MCF 10A (cell line): ENCODE measurements at regions of chr11 and their contacts with region 1.

Region 1: GRCh38 chr11:8768625-8769333 is 86.2 kb downstream of the RPL27A start:
- DNase-seq: peak; percentile 80
- H3K4me3 Mint-ChIP-seq: no peak overlapping the region
- H3K27ac Mint-ChIP-seq: peak overlapping the region; percentile 81
- H3K4me1 Mint-ChIP-seq: peaks cover 59% of the 10 kb centered on the region
- H3K27me3 Mint-ChIP-seq: no peaks in the 10 kb centered on the region
- CTCF ChIP-seq: no peak

Region 2: GRCh38 chr11:8604078-8604723 is 164.6 kb before region 1 on chr11:
- CTCF ChIA-PET with region 1: no interaction called
- POLR2A ChIA-PET with region 1: no interaction called
- intact Hi-C with region 1: loop called (anchors 5 kb)
- DNase-seq: peak; percentile 100
- H3K4me3 Mint-ChIP-seq: peak overlapping the region; percentile 15
- H3K27ac Mint-ChIP-seq: peak overlapping the region; percentile 95
- H3K4me1 Mint-ChIP-seq: peaks cover 25% of the 10 kb centered on the region
- H3K27me3 Mint-ChIP-seq: no peaks in the 10 kb centered on the region
- CTCF ChIP-seq: peak; percentile 64

Region 3: DNA sequence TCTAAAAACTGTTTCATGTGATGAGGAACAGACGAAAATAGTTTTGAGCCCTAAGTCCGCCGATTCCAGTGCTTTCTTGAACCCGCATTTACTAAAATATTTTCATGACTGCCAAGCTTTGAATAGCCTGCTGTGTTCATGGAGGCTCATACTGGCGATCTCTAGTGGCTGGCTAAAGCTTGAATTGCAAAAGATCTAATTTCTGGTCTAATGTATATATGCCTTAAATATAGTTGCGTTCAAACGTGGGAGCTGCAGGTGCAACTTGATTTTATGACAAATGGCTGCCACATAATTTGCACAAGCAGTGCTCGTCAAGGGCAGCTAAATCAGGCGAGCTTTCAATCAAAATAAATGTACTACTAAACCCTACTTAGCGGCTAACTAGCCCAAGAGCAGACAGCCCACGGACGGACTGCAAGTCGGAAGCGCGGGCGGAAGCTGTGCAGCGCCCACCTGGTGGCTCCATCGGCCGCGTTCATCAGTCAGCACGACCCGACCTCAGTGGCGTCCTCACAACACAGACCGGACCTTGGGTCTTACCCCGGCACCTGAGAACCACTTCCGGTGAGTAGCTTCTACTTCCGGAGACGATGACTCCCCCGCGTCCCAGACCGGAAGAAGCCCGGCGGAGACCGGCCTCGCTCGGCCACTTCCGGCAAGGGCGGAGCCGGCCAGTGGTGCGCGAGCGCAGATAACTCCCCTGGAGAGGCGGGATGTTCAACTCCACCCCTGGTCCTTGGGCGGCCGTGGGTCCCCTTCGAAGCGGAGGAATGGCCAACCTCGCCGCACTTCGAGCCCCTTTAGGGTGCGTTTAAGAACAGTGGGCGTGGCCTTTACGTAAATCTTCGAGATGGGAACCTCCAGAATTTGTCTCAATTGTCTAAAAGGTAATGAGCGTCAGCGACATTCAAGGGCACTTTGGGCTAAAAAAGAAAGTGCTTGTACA is 80.1 kb before region 1 on chr11:
- CTCF ChIA-PET with region 1: interaction called, 4 read pairs
- POLR2A ChIA-PET with region 1: interaction called, 18 read pairs
- intact Hi-C with region 1: loop called (anchors 1 kb)
- DNase-seq: peak; percentile 97
- H3K4me3 Mint-ChIP-seq: peak overlapping the region; percentile 75
- H3K27ac Mint-ChIP-seq: peak overlapping the region; percentile 87
- H3K4me1 Mint-ChIP-seq: peaks cover 33% of the 10 kb centered on the region
- H3K27me3 Mint-ChIP-seq: no peaks in the 10 kb centered on the region
- CTCF ChIP-seq: no peak

Region 4: DNA sequence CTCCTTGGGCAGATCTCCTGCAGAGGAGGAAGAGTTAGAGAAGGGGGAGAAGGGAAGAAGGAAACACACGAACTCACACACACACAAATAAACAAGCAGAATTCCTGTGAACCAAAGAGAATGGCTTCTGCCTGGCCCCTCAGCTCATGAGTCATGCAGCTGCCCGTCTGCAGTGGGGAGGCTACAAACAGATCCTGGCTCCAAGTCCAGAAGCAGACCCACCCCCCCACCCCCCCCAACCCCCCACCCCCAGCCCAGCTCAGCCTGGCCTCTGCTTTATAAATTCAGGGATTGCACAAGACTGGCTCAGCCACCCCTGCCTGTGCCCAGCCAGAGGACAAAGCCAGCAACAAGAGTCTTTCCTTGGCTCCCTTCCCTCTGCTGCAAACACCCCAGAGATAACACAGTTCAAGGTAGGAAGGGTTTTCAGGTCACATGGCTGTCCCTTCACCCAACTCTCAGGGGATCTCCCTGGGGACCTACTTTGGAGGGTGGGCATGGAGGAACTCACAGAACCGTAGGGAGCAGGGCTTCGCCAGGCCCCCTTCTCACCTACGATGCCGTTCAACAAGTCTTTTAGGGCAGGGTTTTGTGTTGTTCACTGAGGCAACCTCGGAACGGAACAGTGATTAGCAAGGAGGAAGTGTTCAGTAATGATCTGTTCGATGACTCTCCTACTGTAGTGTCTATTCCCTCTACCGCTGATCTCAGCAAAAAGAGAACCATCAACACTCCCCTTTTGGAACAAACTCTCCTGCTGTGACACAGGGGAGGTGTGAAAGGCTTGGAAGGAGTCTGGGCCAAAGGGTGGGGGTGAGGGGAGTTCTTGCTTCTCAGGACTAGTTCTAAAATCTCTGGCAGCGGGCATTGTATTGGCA is 50.7 kb before region 1 on chr11:
- CTCF ChIA-PET with region 1: interaction called, 4 read pairs
- POLR2A ChIA-PET with region 1: interaction called, 14 read pairs
- intact Hi-C with region 1: loop called (anchors 2 kb)
- DNase-seq: peak; percentile 78
- H3K4me3 Mint-ChIP-seq: peak overlapping the region; percentile 15
- H3K27ac Mint-ChIP-seq: peak overlapping the region; percentile 71
- H3K4me1 Mint-ChIP-seq: peaks cover 43% of the 10 kb centered on the region
- H3K27me3 Mint-ChIP-seq: no peaks in the 10 kb centered on the region
- CTCF ChIP-seq: no peak

Region 5: GRCh38 chr11:8744423-8744822 is 24.4 kb before region 1 on chr11:
- CTCF ChIA-PET with region 1: interaction called, 7 read pairs
- POLR2A ChIA-PET with region 1: interaction called, 11 read pairs
- intact Hi-C with region 1: no loop called
- DNase-seq: peak; percentile 81
- H3K4me3 Mint-ChIP-seq: no peak overlapping the region
- H3K27ac Mint-ChIP-seq: no peak overlapping the region
- H3K4me1 Mint-ChIP-seq: peaks cover 9% of the 10 kb centered on the region
- H3K27me3 Mint-ChIP-seq: no peaks in the 10 kb centered on the region
- CTCF ChIP-seq: no peak